Adrenal gland (tissue), 19 donors: ENCODE measurements at regions of chr5 and their contacts with region 1.

Region 1: DNA sequence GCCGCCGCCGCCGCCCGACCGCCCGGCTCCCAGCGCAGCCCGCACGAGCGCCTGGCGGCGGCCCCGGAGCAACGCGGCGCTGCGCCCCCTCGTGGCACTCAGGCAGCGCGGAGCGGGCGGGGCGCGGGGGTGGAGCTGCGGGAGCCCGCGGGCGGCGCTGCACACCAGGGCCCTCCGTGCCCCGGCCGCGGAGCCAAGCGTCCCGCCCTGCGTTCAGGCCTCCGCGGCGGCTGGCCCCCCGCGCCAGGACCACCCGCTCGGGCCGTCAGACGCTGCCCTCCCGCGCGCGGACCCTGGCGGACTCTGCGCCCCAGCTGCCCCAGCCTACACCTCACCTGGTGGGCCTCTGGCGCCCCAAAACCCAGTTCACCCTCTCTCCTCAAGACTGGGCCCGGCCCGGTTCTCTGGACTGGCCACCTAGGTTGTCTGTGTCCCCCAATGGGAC is at the start of gene RASGEF1C:
- DNase-seq: peak in 6 of 7 donors; percentile 57 to 76 (median 65)
- H3K4me3 ChIP-seq: peak within 1 kb of the TSS in 1 of 4 donors; percentile 50
- H3K27ac ChIP-seq: no peak within 1 kb of the TSS
- H3K4me1 ChIP-seq: peaks cover 0 to 4% of the 10 kb centered on the region in 2 donors
- H3K27me3 ChIP-seq: peaks cover 7% of the 10 kb centered on the region
- CTCF ChIP-seq: peak in 3 of 6 experiments; percentile 45 to 85 (median 70)
- POLR2A ChIP-seq: no peak
- total RNA-seq, gene RASGEF1C: 0.15 to 1.9 (median 0.52) TPM in 4 of 9 donors, not detected in the others

Region 2: DNA sequence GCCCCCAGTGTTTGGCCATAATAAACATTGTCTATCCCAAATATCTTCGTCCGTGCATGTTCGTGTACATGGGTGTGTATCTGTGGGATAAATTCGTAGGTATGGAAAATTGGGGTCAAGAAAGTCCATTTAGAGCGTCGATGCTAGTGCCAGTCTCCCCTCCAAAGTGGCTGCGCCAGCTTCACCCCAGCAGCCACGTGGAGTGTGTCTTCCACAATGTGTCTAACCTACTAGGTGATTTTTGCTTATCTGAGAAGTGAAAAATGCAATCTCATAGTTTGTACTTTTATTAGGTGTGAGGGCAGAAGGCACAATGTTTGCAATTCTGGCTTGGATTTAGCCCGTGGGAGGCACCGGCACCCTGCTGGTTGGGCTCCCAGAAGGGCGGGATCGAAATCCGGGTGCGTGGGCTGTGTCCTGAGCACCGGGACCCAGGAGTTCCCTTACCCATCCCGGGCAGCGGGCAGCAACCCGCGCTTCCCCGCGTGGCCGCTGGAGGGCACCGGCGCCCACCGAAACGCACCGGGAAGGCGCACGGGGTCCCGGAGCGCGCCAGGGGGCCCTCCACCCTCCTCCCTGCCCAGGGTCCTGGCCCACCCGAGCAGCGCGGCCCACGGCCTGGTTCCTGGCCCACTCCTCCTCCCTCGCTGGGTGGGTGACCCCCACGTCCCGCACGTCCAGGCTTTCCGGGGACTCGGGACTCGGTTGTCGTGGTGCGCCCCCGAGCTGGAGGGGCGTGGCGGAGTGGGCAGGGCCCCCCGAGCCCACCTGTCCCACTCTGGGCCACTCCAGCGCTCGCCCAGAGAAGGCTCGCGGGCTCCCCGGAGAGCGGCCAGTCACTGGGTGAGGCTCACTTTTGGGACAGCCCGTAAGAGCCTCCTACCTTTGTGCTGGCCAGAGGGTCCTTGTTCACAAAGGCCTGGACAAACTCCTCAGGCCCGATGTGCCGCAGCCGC is 82.2 kb before region 1 on chr5:
- intact Hi-C with region 1: loop called in 1 of 2 experiments (anchors 2 kb)
- DNase-seq: peak in 4 of 7 donors; percentile 32 to 46 (median 34)
- H3K4me3 ChIP-seq: no peak overlapping the region
- H3K27ac ChIP-seq: no peak overlapping the region
- H3K4me1 ChIP-seq: no peaks in the 10 kb centered on the region
- H3K27me3 ChIP-seq: peaks cover 13% of the 10 kb centered on the region
- CTCF ChIP-seq: peak; percentile 60 to 89 (median 76)
- POLR2A ChIP-seq: no peak